ENCODE measurements at regions of chr10 and their contacts with region 1.

Region 1: DNA sequence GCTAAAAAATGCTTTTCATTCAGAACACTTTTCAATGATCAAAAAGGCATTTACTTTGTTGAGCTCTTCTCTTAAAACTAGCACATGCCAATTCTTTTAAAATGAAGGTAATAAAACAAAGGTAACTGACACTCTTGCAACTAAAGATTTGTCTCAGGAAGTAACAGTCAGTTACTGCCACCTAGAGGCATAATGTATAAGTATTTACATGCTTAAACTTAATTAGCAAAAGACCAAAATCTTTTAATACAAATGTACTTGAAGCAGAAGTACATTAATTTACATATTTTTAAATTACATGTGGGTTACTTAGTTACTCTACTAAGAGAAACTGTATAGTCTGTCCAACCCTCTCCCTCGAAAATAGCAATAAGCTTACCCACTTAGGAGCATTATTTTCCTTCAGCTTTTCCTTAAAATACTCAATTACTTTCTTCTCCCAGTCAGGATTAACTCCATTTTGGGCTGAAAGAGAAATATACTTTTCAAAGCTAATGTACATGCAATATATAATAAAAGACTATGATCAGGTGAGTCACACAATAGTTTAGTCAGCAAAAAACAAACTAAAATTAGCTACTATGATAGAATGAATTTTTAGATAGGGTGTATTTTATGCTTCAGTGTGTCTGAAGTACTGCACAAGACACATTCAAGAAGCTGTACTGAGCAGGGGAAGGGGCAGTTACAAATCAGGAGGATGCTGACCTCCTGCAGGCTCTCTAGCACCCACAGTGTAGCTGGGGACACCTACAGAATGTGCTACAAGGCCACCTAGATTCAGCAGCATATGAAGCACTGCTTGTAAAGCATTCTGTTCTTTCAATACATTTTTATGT is 13.0 kb downstream of the MCMBP start:
- DNase-seq: peak; percentile 68 to 84 (median 81)
- H3K4me3 ChIP-seq: no peak overlapping the region
- H3K27ac ChIP-seq: no peak overlapping the region
- H3K4me1 ChIP-seq: peaks cover 0 to 14% (median 3%) of the 10 kb centered on the region in 4 experiments
- H3K27me3 ChIP-seq: no peaks in the 10 kb centered on the region

Region 2: GRCh38 chr10:119608316-119609155 is 251.1 kb before region 1 on chr10:
- CTCF ChIA-PET with region 1: interaction called, 14 read pairs
- POLR2A ChIA-PET with region 1: no interaction called
- DNase-seq: peak in 2 of 3 donors; percentile 20 to 22
- H3K4me3 ChIP-seq: peak overlapping the region in 1 of 7 experiments; percentile 6
- H3K27ac ChIP-seq: no peak overlapping the region
- H3K4me1 ChIP-seq: peaks cover 0 to 4% (median 2%) of the 10 kb centered on the region in 4 experiments
- H3K27me3 ChIP-seq: no peaks in the 10 kb centered on the region

Region 3: DNA sequence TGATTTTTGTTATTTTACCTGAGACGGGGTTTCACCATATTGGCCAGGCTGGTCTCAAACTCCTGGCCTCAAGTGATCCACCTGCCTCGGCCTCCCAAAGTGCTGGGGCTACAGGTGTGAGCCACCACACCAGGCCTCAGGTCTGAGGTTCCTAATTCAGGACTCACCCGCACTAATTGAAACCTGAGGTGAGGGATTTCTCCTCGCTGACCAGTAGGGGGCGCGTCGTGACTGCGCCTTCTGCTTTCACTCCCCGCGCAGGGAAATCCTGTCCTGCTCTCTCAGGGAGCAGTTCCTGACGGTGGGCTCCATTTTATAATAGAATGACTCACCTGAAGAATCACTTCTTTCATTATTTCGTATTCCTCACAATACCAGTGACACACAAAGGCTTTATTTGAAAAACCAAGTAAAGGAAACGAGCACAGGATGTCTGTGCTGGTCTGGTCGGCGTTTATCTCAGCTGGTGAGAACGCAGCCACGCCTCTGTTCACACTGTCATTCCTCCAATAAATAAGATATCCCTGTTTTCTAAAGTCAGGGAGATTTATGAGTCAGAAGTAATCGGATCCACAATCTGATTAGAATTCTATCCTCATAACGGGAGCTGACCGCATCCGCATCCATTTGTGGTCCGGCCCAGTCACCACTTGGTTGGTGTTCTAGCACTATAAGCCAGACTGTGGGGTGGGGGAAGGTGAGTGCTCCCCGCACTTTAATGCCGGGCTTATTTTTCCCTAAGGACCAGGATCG is 173.0 kb before region 1 on chr10:
- CTCF ChIA-PET with region 1: interaction called, 59 read pairs
- POLR2A ChIA-PET with region 1: no interaction called
- DNase-seq: peak; percentile 85 to 89 (median 89)
- H3K4me3 ChIP-seq: peak overlapping the region in 5 of 7 experiments; percentile 46 to 78 (median 57)
- H3K27ac ChIP-seq: no peak overlapping the region
- H3K4me1 ChIP-seq: peaks cover 0 to 16% (median 10%) of the 10 kb centered on the region in 4 experiments
- H3K27me3 ChIP-seq: no peaks in the 10 kb centered on the region

Region 4: GRCh38 chr10:119693262-119693957 is 166.2 kb before region 1 on chr10:
- CTCF ChIA-PET with region 1: interaction called, 15 read pairs
- POLR2A ChIA-PET with region 1: interaction called, 8 read pairs
- DNase-seq: no peak
- H3K4me3 ChIP-seq: no peak overlapping the region
- H3K27ac ChIP-seq: no peak overlapping the region
- H3K4me1 ChIP-seq: peaks cover 0 to 5% (median 2%) of the 10 kb centered on the region in 4 experiments
- H3K27me3 ChIP-seq: no peaks in the 10 kb centered on the region

Region 5: DNA sequence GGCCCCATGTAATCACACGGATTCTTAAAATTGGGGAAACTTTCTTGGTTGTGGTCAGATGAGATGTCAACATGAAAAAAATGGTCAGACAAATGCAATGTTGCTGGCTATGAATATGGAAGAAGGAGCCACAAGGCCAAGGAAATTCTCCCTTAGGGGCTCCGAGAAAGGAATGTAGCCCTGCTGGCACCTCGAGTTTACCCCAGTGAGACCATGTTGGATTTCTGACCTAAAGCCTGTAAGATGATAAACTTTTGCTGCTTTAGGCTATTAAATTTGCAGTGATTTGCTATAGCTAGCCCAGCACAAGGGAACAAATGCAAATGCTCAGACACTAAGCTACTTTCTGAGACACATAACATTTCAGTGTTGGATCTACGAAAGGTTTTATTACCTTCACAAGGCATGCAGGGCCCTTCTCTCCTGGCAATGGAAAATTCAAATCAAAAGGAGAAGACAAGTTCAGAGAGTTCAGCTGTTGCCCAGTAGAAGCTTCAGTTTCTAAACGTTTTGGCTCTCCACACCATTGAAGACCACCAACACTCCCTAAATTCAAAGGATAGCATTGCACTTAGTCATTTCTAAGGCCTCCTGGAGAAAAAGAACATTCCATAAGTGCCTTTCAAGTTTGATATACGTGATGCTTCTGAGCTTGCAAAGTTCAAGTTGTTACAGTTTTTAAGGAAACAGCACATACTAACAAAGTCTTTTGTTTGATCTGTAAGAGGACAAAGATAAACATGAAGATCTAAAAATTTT is 10.4 kb before region 1 on chr10:
- CTCF ChIA-PET with region 1: interaction called, 11 read pairs
- POLR2A ChIA-PET with region 1: no interaction called
- DNase-seq: no peak
- H3K4me3 ChIP-seq: no peak overlapping the region
- H3K27ac ChIP-seq: no peak overlapping the region
- H3K4me1 ChIP-seq: peaks cover 0 to 16% (median 2%) of the 10 kb centered on the region in 4 experiments
- H3K27me3 ChIP-seq: no peaks in the 10 kb centered on the region

Region 6: DNA sequence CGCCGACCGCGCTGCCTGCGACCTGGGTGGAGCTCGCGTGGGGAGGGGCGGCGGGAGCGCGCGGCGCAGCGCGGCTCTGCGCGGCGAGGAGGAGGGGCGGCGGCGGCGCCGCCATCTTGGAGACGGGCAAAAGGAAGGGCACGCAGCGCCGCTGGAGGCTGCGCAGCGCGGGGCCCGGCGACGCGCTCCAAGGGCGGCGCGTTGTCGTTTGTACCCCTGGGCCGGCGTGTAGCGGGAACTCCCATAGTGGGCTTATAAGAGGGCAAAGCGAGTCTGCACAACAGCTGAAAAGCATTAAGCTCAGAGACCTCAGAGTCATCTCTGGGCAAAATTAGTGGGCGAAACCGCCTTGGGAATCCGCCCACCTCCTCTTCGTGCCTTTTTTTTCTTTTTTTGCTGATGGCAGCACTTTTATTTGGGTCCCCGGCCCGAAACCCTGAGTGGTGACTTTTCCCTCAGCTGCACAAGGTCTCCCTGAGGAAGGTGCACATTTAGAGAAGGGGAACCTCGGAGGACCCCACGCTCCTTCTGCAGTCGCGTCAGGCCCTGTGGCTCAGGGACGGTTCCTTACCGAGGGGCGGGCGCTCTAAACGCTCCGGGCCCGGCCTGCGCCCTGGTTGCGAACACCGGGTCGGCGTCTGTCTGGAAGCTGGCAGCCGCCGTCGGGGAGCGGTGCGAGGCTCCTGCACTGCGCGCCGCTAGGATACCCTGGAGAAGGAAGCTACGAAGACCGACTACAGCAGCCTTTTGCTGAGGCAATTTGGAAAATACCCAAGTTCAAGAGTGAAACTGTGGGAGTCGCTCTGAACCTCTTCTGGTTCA is 13.4 kb after region 1 on chr10:
- CTCF ChIA-PET with region 1: interaction called, 35 read pairs
- POLR2A ChIA-PET with region 1: interaction called, 3 read pairs
- DNase-seq: peak; percentile 89 to 94 (median 94)
- H3K4me3 ChIP-seq: peak overlapping the region; percentile 49 to 94 (median 82)
- H3K27ac ChIP-seq: peak overlapping the region; percentile 59 to 86
- H3K4me1 ChIP-seq: peaks cover 4 to 29% (median 22%) of the 10 kb centered on the region in 4 experiments
- H3K27me3 ChIP-seq: no peaks in the 10 kb centered on the region

Measured in common myeloid progenitor, CD34-positive (primary cell).